ENCODE measurements at regions of chrX and their contacts with region 1.

Region 1: DNA sequence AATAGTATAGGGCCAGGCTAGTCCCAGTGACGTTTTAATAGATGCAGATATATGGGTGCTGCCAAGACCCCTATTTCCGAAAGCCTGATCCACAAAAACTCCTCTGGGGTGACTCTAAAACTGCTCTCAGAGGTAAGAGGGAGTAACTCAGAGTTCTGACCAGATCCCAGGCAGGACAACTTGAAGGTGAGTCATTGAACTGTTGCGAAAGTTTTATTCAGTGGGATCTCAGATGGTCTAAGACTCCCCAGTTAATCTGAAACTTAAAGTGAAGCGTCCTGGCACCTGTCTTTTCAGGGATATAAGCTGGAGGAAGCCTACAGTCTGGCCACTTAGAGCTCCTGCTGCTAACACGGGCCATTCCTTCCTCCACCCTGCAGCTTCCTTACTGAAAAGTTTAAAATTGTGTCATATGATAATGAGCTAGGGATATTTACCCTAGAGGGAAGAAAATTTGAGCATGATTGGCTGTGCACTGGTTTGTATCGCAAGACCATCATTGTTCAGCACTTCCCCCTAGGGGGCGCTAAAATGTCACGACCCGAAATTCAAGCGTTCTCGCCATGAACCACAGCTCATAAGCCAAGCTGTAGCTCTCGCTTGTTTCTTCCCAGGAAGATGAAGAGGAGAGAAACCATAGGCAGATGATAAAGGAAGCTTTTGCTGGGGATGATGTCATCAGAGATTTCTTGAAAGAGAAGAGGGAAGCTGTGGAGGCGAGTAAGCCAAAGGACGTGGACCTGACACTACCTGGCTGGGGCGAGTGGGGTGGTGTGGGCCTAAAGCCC is 19.5 kb downstream of the UTP14A start:
- DNase-seq: peak; percentile 45 to 82
- ATAC-seq: peak; percentile 73 to 87
- H3K4me3 ChIP-seq: no peak overlapping the region
- H3K27ac ChIP-seq: peak overlapping the region in 1 of 2 experiments; percentile 2; a peak in 1 of 6 replicates
- H3K4me1 ChIP-seq: peaks cover 12% of the 10 kb centered on the region
- CTCF ChIP-seq: peak; percentile 67
- EP300 ChIP-seq: no peak
- POLR2A ChIP-seq: no peak
- RAD21 ChIP-seq: peak; percentile 61 to 74

Region 2: GRCh38 chrX:129905787-129906580 is 19.5 kb before region 1 on chrX and contains the start of gene UTP14A:
- CTCF ChIA-PET with region 1: interaction called, 23 read pairs
- POLR2A ChIA-PET with region 1: interaction called, 8 read pairs
- DNase-seq: peak; percentile 57 to 96
- ATAC-seq: peak; percentile 99 to 100
- H3K4me3 ChIP-seq: peak within 1 kb of the TSS; percentile 92
- H3K27ac ChIP-seq: peak within 1 kb of the TSS; percentile 89 to 92
- H3K4me1 ChIP-seq: peaks cover 16% of the 10 kb centered on the region; the same call in 2 of the 3 replicates
- CTCF ChIP-seq: no peak
- EP300 ChIP-seq: no peak
- POLR2A ChIP-seq: peak; percentile 46
- RAD21 ChIP-seq: no peak
- polyA plus RNA-seq, gene UTP14A: 36.5 and 47.3 TPM in 2 replicates

Region 3: DNA sequence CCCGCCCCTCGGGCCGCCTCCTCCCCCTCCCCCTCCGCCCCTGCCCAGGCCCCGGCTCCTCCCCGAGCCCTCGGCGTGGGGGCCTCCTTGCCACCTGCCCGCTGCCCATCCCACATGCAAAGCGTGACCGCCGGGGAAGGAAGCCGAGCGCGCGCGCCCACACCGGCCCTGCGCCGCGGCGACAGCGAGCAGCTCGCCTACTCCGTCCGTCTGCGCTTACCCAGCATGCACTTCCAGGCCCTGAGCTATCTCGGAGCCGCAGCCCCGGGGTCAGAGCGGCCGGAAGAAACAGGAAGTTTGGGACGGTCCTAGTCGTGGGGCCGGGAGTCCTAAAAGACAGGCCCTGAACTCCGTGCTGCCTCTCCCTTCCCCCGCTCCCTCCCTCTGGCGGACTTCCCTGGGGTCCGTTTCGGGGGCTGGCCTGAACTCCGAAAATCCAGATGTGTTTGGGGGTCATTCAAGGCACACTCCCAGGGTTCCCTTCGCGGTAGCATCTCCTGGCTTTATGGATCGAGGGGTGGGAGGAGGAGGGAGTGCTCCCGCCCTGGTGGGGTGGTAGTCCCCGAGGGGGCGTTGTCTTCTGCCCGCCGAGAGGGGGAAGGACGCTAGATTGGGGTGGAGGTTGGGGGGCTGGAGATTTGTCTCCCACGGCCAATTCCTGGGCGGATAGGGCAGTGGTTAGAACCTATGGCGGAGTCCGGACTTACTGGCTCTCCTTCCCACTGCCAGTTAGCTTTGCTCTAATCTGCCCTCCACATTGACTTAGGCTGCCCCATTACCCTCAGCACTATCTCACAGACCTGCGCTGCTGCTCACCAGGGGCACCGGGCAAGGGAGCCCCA is 32.0 kb after region 1 on chrX:
- CTCF ChIA-PET with region 1: interaction called, 10 read pairs
- POLR2A ChIA-PET with region 1: interaction called, 3 read pairs
- DNase-seq: peak; percentile 73 to 84
- ATAC-seq: peak; percentile 85 to 91
- H3K4me3 ChIP-seq: peak overlapping the region; percentile 61
- H3K27ac ChIP-seq: peak overlapping the region; percentile 86 to 88
- H3K4me1 ChIP-seq: peaks cover 8% of the 10 kb centered on the region
- CTCF ChIP-seq: no peak
- EP300 ChIP-seq: no peak
- POLR2A ChIP-seq: peak; percentile 56
- RAD21 ChIP-seq: no peak

Region 4: DNA sequence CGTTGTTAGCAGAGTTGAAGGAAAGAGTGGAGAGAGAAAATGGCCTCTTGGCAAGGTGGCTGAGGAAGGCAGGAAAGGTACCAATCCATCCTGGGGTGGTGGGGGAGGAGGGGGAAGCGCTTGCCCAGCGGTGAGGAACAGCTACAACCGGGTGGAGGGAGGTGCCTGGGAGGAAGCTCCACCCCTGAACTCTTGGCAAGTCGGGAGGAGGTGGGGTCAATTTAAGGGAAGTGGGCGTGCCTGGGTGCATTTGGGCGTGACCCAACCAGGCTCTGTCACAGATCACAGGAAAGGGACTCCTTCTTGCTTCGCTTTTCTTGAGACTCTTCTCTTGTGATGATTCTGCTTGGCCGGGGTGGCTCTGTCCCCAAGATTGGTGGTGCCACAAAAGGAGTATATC is 98.6 kb after region 1 on chrX:
- CTCF ChIA-PET with region 1: interaction called, 56 read pairs
- POLR2A ChIA-PET with region 1: no interaction called
- DNase-seq: peak; percentile 40 to 56
- ATAC-seq: peak; percentile 43 to 89; a peak in 5 of 6 replicates
- H3K4me3 ChIP-seq: no peak overlapping the region
- H3K27ac ChIP-seq: no peak overlapping the region
- H3K4me1 ChIP-seq: no peaks in the 10 kb centered on the region
- CTCF ChIP-seq: no peak
- EP300 ChIP-seq: no peak
- POLR2A ChIP-seq: no peak
- RAD21 ChIP-seq: no peak

Region 5: GRCh38 chrX:130034178-130034577 is 108.7 kb after region 1 on chrX:
- CTCF ChIA-PET with region 1: interaction called, 56 read pairs
- POLR2A ChIA-PET with region 1: no interaction called
- DNase-seq: no peak
- ATAC-seq: no peak
- H3K4me3 ChIP-seq: no peak overlapping the region
- H3K27ac ChIP-seq: no peak overlapping the region
- H3K4me1 ChIP-seq: no peaks in the 10 kb centered on the region
- CTCF ChIP-seq: no peak
- EP300 ChIP-seq: no peak
- POLR2A ChIP-seq: no peak
- RAD21 ChIP-seq: no peak

Measured in A549 (cell line).